Prostate gland (tissue), 2 donors: ENCODE measurements at regions of chr7 and their contacts with region 1.

Region 1: DNA sequence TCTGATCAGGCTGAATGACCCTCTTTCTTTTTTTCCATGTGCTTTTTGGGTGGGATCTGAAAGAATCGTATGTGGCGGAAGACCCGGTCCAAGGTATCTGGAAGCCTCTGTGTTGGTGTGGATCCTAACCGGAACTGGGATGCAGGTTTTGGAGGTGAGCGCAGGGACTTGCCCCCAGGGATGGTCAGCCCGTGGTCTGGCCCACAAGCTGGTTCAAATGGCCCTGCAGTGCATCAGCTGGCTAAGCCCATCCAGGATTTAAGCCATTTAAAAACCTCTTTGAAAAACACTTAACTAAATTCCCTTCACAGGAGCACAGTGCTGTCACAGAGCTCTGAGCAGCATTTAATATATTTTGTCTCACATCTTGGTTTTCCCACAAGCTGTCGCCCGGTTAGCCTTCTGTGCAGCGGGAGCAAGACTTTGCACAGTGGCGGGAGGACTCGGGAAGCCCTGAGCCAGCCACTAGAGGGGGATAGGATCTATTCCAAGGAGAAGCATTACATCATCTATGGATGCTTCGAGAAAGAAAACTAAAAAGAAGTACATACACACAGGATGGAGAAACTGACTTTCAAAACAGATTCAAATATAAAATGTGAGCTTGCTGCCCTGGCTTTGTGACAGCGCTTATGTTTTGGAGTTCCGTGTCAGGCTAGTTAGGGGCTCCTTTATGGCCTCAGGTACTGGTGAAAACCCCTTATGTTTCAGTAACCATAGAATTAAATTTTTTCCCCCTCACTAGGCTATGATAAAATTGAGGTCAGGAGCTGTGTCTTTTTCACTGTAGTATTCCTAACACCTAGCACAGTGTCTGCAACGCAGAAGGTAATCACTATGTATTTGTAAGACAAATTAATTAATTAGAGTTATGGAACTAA is 11.3 kb downstream of the CPA2 start:
- DNase-seq: no peak
- H3K4me3 ChIP-seq: no peak overlapping the region
- H3K27ac ChIP-seq: no peak overlapping the region
- H3K4me1 ChIP-seq: no peaks in the 10 kb centered on the region
- H3K27me3 ChIP-seq: no peaks in the 10 kb centered on the region
- CTCF ChIP-seq: peak in 3 of 4 experiments; percentile 17 to 52 (median 47)
- POLR2A ChIP-seq: no peak

Region 2: DNA sequence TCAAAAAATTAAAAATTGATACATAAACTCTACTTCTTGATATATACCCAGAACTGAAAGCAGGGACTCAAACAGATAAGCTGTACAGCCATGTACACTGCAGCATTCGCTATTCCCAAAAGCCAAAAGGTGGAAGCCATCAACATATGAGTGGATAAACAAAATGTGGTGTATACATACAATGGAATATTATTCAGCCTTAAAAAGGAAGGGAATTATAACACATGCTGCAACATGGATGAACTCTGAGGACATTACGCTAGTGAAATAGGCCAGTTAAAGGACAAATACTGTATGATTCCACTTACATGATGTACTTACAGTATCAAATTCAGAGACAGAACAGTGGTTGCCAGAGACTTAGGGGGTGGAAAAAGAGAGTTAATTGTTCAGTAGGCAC is 80.9 kb before region 1 on chr7:
- intact Hi-C with region 1: no loop called
- DNase-seq: no peak
- H3K4me3 ChIP-seq: no peak overlapping the region
- H3K27ac ChIP-seq: no peak overlapping the region
- H3K4me1 ChIP-seq: no peaks in the 10 kb centered on the region
- H3K27me3 ChIP-seq: no peaks in the 10 kb centered on the region
- CTCF ChIP-seq: no peak
- POLR2A ChIP-seq: no peak

Region 3: GRCh38 chr7:130227883-130228575 is 50.0 kb before region 1 on chr7:
- intact Hi-C with region 1: no loop called
- DNase-seq: no peak
- H3K4me3 ChIP-seq: no peak overlapping the region
- H3K27ac ChIP-seq: no peak overlapping the region
- H3K4me1 ChIP-seq: no peaks in the 10 kb centered on the region
- H3K27me3 ChIP-seq: no peaks in the 10 kb centered on the region
- CTCF ChIP-seq: no peak
- POLR2A ChIP-seq: no peak

Region 4: DNA sequence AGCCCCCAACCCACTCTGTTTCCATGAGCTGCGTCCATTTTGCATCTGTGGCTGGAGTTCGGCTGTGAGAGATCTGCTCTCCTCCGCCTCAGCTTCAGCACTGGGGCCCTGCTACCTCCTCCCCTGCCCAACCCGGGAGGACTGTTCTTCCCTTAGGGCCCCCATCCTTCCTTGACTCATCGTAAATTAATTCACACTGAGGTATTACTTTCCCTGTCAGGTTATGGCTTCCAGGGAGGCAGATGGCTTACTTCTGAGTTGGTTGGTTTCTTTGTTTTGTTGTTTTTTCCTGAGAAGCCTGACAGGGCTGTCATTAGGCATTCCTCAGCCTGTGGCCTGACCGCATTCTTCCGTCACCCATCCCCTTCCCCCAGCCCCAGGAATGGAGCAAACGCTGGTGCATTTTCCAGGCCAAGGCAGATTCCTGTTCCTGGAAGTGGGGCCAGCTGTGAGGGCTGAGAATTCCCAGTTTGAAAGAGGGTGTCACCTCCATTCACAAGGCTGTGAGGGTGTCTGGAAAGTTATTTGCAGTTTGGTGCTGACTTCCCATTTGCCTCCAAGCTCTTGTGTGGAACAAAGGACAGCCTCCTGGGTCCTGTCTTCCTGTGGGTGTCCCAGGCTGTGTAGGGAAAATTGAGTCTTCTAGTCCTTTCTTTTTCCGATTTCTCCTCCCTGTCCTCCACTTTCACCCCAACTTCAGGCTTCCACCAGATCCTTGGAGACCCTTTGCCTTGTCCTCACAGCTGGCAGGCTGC is 78.3 kb after region 1 on chr7:
- intact Hi-C with region 1: no loop called
- DNase-seq: peak; percentile 26
- H3K4me3 ChIP-seq: no peak overlapping the region
- H3K27ac ChIP-seq: peak overlapping the region; percentile 53 to 66
- H3K4me1 ChIP-seq: no peaks in the 10 kb centered on the region
- H3K27me3 ChIP-seq: no peaks in the 10 kb centered on the region
- CTCF ChIP-seq: no peak
- POLR2A ChIP-seq: no peak

Region 5: GRCh38 chr7:130721486-130722280 is 443.7 kb after region 1 on chr7:
- intact Hi-C with region 1: loop called (anchors 5 kb)
- DNase-seq: peak; percentile 36
- H3K4me3 ChIP-seq: no peak overlapping the region
- H3K27ac ChIP-seq: no peak overlapping the region
- H3K4me1 ChIP-seq: no peaks in the 10 kb centered on the region
- H3K27me3 ChIP-seq: no peaks in the 10 kb centered on the region
- CTCF ChIP-seq: peak in 3 of 4 experiments; percentile 24 to 53 (median 48)
- POLR2A ChIP-seq: no peak